Ascending aorta (tissue), 2 donors: ENCODE measurements at regions of chr3 and their contacts with region 1.

Region 1: GRCh38 chr3:77780278-77780996 is 740.5 kb downstream of the ROBO2 start:
- DNase-seq: no peak
- H3K4me3 ChIP-seq: no peak overlapping the region
- H3K27ac ChIP-seq: no peak overlapping the region
- H3K4me1 ChIP-seq: no peaks in the 10 kb centered on the region
- H3K27me3 ChIP-seq: no peaks in the 10 kb centered on the region
- CTCF ChIP-seq: no peak

Region 2: GRCh38 chr3:76679541-76679940 is 1100.9 kb before region 1 on chr3:
- intact Hi-C with region 1: no loop called
- DNase-seq: no peak
- H3K4me3 ChIP-seq: no peak overlapping the region
- H3K27ac ChIP-seq: no peak overlapping the region
- H3K4me1 ChIP-seq: no peaks in the 10 kb centered on the region
- H3K27me3 ChIP-seq: no peaks in the 10 kb centered on the region
- CTCF ChIP-seq: no peak

Region 3: DNA sequence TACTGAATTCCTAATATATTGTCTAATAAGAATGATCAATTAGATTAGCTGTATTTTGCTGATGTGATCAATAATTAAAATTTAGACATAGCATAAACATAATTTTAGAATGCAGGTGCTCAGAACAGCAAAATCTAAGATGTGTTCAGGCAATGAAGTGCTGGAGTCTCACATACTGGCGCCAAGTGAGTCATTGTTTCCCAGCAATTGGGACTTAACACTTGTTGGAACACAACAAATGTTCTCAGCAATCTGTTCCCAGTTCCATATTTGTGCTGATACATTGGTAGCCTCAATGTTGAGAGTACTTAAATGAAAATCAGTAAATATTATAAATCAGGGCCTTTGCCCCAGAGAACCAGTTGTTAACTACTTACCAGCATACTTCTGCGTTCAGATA is 1368.3 kb after region 1 on chr3:
- intact Hi-C with region 1: loop called (anchors 5 kb)
- DNase-seq: no peak
- H3K4me3 ChIP-seq: no peak overlapping the region
- H3K27ac ChIP-seq: no peak overlapping the region
- H3K4me1 ChIP-seq: no peaks in the 10 kb centered on the region
- H3K27me3 ChIP-seq: no peaks in the 10 kb centered on the region
- CTCF ChIP-seq: no peak